IMR-90 (cell line): ENCODE measurements at regions of chr1 and their contacts with region 1.

Region 1: DNA sequence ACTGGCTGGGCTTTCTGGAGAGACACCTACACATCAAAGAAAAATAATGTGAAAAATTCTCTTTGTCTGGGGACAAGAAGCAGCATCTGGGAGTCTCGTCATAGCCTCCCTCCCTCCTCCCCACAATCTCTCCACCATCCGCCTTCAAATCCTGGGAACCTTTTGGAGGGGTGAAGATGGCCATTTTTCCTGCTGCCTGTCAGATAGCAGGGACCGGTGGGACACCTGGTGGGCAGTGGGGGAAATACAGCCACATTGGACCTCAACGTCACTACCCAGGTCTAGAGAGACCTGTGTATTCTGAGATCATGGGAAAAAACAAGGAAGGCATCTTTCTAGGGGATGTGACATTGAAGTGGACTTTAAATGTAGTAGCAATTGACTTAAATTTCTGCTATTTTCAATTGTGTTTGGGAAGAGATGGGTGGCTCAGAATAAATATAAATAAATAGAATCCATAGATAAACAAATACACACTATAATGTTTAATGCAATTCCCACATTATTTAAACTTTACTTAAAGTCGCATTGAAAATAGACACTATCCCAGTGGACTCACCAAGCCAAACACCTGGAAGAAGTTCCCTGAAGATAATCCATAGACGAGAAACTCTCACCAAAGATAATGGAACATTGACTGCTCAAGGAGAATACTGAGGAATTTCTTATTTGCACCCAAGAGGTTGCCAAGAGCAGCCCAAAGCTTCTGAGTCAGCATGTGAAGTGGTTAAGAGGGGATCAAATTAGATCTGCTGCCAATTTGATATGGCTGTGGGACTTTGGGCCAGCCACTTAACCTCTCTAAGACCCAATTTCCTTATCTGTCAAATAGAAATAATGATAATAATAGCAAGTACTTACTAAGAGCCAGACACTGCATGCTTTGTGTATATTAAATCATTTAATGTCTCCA is 147.6 kb upstream of the CAMK1G start:
- DNase-seq: peak; percentile 77
- ATAC-seq: peak; percentile 100
- H3K4me3 ChIP-seq: no peak overlapping the region
- H3K27ac ChIP-seq: no peak overlapping the region
- H3K4me1 ChIP-seq: 0 out of 2 replicates have a peak, but pooled peaks cover 1% of the 10 kb centered on the region
- H3K27me3 ChIP-seq: peaks cover 5% of the 10 kb centered on the region
- CTCF ChIP-seq: peak; percentile 96
- POLR2A ChIP-seq: no peak
- RAD21 ChIP-seq: peak; percentile 96

Region 2: GRCh38 chr1:208652296-208653160 is 783.4 kb before region 1 on chr1:
- CTCF ChIA-PET with region 1: no interaction called
- POLR2A ChIA-PET with region 1: no interaction called
- dilution Hi-C with region 1: no loop called
- in situ Hi-C with region 1: no loop called
- intact Hi-C with region 1: loop called (anchors 5 kb)
- DNase-seq: peak; percentile 66
- ATAC-seq: peak; percentile 96
- H3K4me3 ChIP-seq: no peak overlapping the region
- H3K27ac ChIP-seq: no peak overlapping the region
- H3K4me1 ChIP-seq: no peaks in the 10 kb centered on the region
- H3K27me3 ChIP-seq: no peaks in the 10 kb centered on the region
- CTCF ChIP-seq: peak; percentile 73
- POLR2A ChIP-seq: no peak
- RAD21 ChIP-seq: peak; percentile 35; the same call in 1 of the 2 replicates

Region 3: DNA sequence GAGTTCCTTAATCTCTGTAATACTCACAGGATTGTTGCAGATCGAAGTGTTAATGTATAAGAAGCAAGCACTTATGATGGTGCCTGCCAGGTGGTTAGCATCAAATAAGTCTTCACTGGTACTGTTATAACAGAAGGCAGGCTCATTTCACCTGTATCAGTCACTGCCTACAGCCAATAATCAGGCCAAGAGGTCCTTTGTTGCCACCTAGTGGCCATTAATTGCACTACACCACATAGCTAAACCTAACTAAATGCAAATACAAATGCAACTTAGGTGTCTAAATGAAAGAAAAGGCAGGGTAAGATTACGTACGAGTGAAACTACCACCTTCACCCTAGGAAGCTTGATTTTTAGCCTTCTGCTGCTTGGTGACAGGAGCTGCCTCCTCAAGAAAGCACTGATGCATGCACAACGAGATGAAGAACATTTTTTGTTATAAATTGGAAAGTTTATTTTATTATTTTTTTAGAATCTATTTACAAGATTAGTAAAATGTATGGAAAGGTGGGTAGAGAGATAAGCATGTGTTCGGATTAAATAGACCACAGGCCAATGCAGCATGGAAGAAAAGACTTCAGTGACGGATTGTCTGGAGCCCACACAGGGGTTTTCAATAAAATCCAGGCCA is 187.1 kb before region 1 on chr1:
- CTCF ChIA-PET with region 1: interaction called, 4 read pairs
- POLR2A ChIA-PET with region 1: no interaction called
- dilution Hi-C with region 1: no loop called
- in situ Hi-C with region 1: no loop called
- intact Hi-C with region 1: loop called (anchors 1 kb)
- DNase-seq: peak; percentile 54
- ATAC-seq: peak; percentile 82
- H3K4me3 ChIP-seq: no peak overlapping the region
- H3K27ac ChIP-seq: no peak overlapping the region
- H3K4me1 ChIP-seq: no peaks in the 10 kb centered on the region
- H3K27me3 ChIP-seq: no peaks in the 10 kb centered on the region
- CTCF ChIP-seq: peak; percentile 77
- POLR2A ChIP-seq: no peak
- RAD21 ChIP-seq: peak; percentile 61

Region 4: GRCh38 chr1:209335178-209335577 is 100.7 kb before region 1 on chr1:
- CTCF ChIA-PET with region 1: no interaction called
- POLR2A ChIA-PET with region 1: no interaction called
- dilution Hi-C with region 1: no loop called
- in situ Hi-C with region 1: no loop called
- intact Hi-C with region 1: loop called (anchors 1 kb)
- DNase-seq: peak; percentile 20
- ATAC-seq: peak; percentile 92
- H3K4me3 ChIP-seq: no peak overlapping the region
- H3K27ac ChIP-seq: no peak overlapping the region
- H3K4me1 ChIP-seq: no peaks in the 10 kb centered on the region
- H3K27me3 ChIP-seq: peaks cover 2% of the 10 kb centered on the region
- CTCF ChIP-seq: peak; percentile 60
- POLR2A ChIP-seq: no peak
- RAD21 ChIP-seq: peak; percentile 41

Region 5: DNA sequence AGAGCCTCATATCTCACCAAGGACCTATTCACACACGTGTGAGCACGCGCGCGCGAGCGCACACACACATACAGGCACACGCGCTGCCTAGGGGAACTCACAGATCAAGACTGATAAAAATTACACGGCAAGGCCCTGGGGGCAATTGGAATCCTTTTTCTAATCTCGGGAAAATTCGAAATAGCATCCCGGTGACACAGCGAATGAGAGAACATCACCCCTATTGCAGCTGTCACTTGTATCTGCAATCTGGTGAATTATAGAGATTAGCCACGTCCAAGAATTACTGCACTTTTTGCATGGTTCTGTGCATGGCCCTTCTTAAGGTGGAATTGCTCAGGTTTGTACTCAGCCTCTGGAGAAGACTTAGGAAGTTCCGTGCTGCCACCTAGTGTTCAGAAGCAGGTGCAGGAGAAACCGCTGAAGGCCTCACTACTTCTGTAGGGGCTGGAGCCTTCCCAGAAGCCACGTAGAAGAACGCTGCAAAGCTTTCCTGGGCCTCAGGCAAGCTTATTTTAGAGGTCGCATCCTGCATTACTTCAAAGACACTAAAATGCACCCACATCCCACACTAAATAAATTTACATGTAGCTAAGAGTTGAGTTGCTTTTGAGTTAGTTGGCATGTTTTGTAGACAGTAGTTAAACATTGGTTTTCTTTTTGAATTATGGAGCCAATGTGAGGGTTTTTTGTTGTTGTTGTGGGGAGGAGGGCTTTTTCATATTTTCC is 81.6 kb before region 1 on chr1:
- CTCF ChIA-PET with region 1: interaction called, 3 read pairs
- POLR2A ChIA-PET with region 1: no interaction called
- dilution Hi-C with region 1: no loop called
- in situ Hi-C with region 1: loop called (anchors 10 kb)
- intact Hi-C with region 1: loop called (anchors 1 kb)
- DNase-seq: peak; percentile 92
- ATAC-seq: peak; percentile 97
- H3K4me3 ChIP-seq: no peak overlapping the region
- H3K27ac ChIP-seq: no peak overlapping the region
- H3K4me1 ChIP-seq: no peaks in the 10 kb centered on the region
- H3K27me3 ChIP-seq: no peaks in the 10 kb centered on the region
- CTCF ChIP-seq: peak; percentile 84
- POLR2A ChIP-seq: no peak
- RAD21 ChIP-seq: peak; percentile 81